B cell (primary cell): ENCODE measurements at regions of chr19 and their contacts with region 1.

Region 1: GRCh38 chr19:19663256-19664038 is at the start of gene ATP13A1:
- DNase-seq: peak; percentile 99
- ATAC-seq: peak; percentile 79
- H3K4me3 ChIP-seq: peak within 1 kb of the TSS; percentile 75 to 88 (median 77)
- H3K4me3 Mint-ChIP-seq: peak within 1 kb of the TSS; percentile 93
- H3K27ac ChIP-seq: peak within 1 kb of the TSS; percentile 77 to 97
- H3K27ac Mint-ChIP-seq: peak within 1 kb of the TSS; percentile 98
- H3K4me1 ChIP-seq: peaks cover 39 to 60% of the 10 kb centered on the region in 2 donors
- H3K4me1 Mint-ChIP-seq: peaks cover 40% of the 10 kb centered on the region
- H3K27me3 ChIP-seq: no peaks in the 10 kb centered on the region
- H3K27me3 Mint-ChIP-seq: no peaks in the 10 kb centered on the region
- CTCF ChIP-seq: peak; percentile 22
- total RNA-seq, gene ATP13A1: 153 and 156 TPM in 2 replicates

Region 2: DNA sequence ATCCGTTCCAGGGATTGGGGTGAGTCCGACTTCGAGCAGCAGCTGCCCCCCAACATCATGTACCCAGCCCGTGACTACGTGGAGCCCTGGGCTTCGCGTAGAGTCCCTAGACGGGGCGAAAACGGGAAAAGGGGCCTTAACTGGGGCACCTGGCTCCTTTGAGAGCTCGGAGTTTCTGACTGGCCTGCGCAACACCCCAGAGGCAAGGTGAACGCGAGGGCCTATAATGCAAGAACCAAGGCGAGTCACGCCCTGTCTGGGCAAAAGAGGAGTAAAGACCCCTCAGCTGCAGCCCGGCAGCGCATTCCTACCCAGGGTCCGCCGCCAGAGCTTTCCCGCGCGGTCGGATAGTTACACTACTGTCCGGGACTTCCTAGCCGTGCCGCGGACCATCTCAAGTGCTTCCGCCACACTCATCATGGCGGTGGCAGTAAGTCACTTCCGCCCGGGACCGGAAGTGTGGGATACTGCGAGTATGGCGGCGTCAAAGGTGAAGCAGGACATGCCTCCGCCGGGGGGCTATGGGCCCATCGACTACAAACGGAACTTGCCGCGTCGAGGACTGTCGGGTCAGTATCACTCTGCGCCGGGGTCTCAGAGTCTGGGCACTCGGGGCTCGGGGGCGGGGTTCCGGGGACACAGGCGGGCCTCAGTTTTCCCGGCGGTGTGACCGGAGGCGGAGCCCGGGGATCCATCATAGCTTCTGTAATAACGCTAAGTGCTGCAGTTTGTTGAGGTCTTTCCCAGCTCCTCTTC is 147.5 kb before region 1 on chr19 and contains the start of gene NDUFA13:
- CTCF ChIA-PET with region 1: no interaction called
- POLR2A ChIA-PET with region 1: interaction called, 5 read pairs
- intact Hi-C with region 1: loop called (anchors 1 kb)
- DNase-seq: peak; percentile 96
- ATAC-seq: peak; percentile 94
- H3K4me3 ChIP-seq: peak within 1 kb of the TSS; percentile 82 to 99 (median 95)
- H3K4me3 Mint-ChIP-seq: peak within 1 kb of the TSS; percentile 93
- H3K27ac ChIP-seq: peak within 1 kb of the TSS; percentile 72 to 81
- H3K27ac Mint-ChIP-seq: peak within 1 kb of the TSS; percentile 92
- H3K4me1 ChIP-seq: peaks cover 12 to 23% of the 10 kb centered on the region in 2 donors
- H3K4me1 Mint-ChIP-seq: peaks cover 27% of the 10 kb centered on the region
- H3K27me3 ChIP-seq: no peaks in the 10 kb centered on the region
- H3K27me3 Mint-ChIP-seq: no peaks in the 10 kb centered on the region
- CTCF ChIP-seq: no peak
- total RNA-seq, gene NDUFA13: 170 and 188 TPM in 2 replicates

Region 3: GRCh38 chr19:19610376-19611202 is 52.9 kb before region 1 on chr19:
- CTCF ChIA-PET with region 1: no interaction called
- POLR2A ChIA-PET with region 1: no interaction called
- intact Hi-C with region 1: no loop called
- DNase-seq: no peak
- ATAC-seq: no peak
- H3K4me3 ChIP-seq: no peak overlapping the region
- H3K4me3 Mint-ChIP-seq: no peak overlapping the region
- H3K27ac ChIP-seq: no peak overlapping the region
- H3K27ac Mint-ChIP-seq: no peak overlapping the region
- H3K4me1 ChIP-seq: no peaks in the 10 kb centered on the region
- H3K4me1 Mint-ChIP-seq: peaks cover 5% of the 10 kb centered on the region
- H3K27me3 ChIP-seq: no peaks in the 10 kb centered on the region
- H3K27me3 Mint-ChIP-seq: no peaks in the 10 kb centered on the region
- CTCF ChIP-seq: no peak

Region 4: DNA sequence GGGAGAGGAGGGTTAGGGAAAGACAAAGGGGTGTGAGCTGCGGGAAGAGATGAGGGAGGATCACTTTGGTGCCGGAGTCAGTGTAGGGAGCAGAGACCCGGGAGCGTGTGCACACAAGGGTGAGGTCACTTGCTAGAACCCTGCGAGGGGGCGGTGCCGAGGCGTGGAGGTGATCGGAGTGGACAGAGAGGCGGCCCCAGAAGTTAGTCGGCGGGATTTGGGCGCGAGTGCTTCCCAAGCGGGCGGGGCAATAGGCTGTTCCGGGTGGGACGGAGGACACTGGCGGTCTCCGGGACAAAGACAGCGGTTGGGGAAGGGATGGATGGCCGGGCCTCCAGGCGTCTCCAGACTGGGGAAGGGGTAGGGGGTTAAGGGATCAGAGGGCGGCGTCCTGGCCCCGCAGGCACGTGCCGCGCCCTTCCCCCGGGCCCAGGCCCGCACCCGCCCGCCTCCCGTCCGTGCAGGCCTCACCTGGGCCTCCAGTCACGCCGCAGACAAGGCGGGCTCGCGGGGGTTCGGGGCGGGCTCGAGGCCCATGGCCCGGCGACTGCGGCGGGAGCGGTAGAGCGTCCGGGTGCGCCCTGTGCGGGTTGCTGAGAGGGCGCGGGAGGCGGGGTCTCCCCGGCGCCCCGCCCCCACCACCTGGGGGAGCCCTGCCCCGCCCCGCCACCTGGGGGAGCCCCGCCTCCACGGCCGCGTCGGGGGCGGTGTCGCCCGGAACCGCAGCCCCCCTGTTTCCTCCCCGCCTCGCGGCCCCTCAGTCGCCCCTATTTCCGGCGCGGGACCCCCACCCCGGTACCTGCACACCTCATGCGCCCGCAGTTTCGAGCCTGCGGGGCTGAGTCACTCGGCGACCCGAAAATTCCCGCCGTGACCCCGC is 35.6 kb before region 1 on chr19 and contains the start of gene LPAR2:
- CTCF ChIA-PET with region 1: interaction called, 4 read pairs
- POLR2A ChIA-PET with region 1: interaction called, 7 read pairs
- intact Hi-C with region 1: loop called (anchors 1 kb)
- DNase-seq: peak; percentile 85
- ATAC-seq: peak; percentile 90
- H3K4me3 ChIP-seq: peak within 1 kb of the TSS; percentile 36 to 79 (median 66)
- H3K4me3 Mint-ChIP-seq: peak within 1 kb of the TSS; percentile 92
- H3K27ac ChIP-seq: peak within 1 kb of the TSS; percentile 47 to 71
- H3K27ac Mint-ChIP-seq: peak within 1 kb of the TSS; percentile 95
- H3K4me1 ChIP-seq: peaks cover 7 to 15% of the 10 kb centered on the region in 2 donors
- H3K4me1 Mint-ChIP-seq: peaks cover 20% of the 10 kb centered on the region
- H3K27me3 ChIP-seq: no peaks in the 10 kb centered on the region
- H3K27me3 Mint-ChIP-seq: no peaks in the 10 kb centered on the region
- CTCF ChIP-seq: no peak
- total RNA-seq, gene LPAR2: 27.1 and 30.3 TPM in 2 replicates

Region 5: DNA sequence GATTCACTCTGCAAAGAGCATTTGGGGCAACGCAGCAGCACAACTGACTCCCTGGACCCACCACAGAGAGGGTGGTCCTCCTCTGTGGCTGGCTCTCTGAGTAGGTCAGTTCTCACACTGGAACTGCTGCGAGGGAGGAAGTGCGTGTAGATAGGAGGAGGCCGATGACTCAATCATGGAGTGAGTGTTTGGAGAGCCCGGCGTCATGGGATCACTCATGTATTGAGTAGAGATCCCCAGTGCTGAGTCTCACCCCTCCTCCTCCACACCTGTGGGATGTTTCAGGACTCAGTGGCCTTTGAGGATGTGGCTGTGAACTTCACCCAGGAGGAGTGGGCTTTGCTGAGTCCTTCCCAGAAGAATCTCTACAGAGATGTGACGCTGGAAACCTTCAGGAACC is 14.1 kb after region 1 on chr19:
- CTCF ChIA-PET with region 1: no interaction called
- POLR2A ChIA-PET with region 1: interaction called, 4 read pairs
- intact Hi-C with region 1: loop called (anchors 2 kb)
- DNase-seq: no peak
- ATAC-seq: no peak
- H3K4me3 ChIP-seq: no peak overlapping the region
- H3K4me3 Mint-ChIP-seq: no peak overlapping the region
- H3K27ac ChIP-seq: no peak overlapping the region
- H3K27ac Mint-ChIP-seq: no peak overlapping the region
- H3K4me1 ChIP-seq: no peaks in the 10 kb centered on the region
- H3K4me1 Mint-ChIP-seq: peaks cover 16% of the 10 kb centered on the region
- H3K27me3 ChIP-seq: no peaks in the 10 kb centered on the region
- H3K27me3 Mint-ChIP-seq: no peaks in the 10 kb centered on the region
- CTCF ChIP-seq: no peak

Region 6: DNA sequence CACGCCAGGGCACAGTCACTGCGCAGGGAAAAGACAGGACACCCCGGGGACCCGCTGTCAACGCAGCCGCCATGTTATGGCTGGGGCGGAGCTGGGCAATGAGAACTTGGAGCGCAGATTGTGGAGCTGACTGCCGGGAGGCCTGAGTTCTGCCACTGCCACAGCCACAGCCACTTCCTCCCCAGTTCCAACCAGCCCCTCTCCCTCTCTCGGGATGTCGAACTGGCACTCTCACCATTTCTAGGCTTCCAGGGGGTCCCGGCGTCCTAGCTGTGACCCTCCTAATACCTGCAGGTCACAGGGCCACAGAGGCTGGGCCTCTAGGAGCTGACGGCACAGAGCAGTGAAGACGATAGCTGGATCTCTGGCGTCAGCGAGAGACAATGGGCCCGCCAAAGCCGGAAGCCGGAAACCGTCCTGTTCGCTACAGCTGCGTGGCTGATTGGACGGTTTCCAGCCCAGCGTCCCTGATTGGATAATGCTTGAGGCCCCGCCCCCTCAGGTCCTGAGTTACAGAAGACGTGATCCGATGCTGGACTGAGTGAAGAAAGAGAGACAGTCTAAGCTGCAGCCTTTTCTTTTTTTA is 158.0 kb after region 1 on chr19 and contains the start of gene ZNF506:
- CTCF ChIA-PET with region 1: no interaction called
- POLR2A ChIA-PET with region 1: interaction called, 16 read pairs
- intact Hi-C with region 1: loop called (anchors 1 kb)
- DNase-seq: peak; percentile 97
- ATAC-seq: peak; percentile 93
- H3K4me3 ChIP-seq: peak within 1 kb of the TSS; percentile 74 to 100 (median 91)
- H3K4me3 Mint-ChIP-seq: peak within 1 kb of the TSS; percentile 99
- H3K27ac ChIP-seq: peak within 1 kb of the TSS; percentile 97 to 99
- H3K27ac Mint-ChIP-seq: peak within 1 kb of the TSS; percentile 99
- H3K4me1 ChIP-seq: peaks cover 40 to 48% of the 10 kb centered on the region in 2 donors
- H3K4me1 Mint-ChIP-seq: peaks cover 51% of the 10 kb centered on the region
- H3K27me3 ChIP-seq: no peaks in the 10 kb centered on the region
- H3K27me3 Mint-ChIP-seq: no peaks in the 10 kb centered on the region
- CTCF ChIP-seq: no peak
- total RNA-seq, gene ZNF506: 67.6 and 80.3 TPM in 2 replicates

Region 7: DNA sequence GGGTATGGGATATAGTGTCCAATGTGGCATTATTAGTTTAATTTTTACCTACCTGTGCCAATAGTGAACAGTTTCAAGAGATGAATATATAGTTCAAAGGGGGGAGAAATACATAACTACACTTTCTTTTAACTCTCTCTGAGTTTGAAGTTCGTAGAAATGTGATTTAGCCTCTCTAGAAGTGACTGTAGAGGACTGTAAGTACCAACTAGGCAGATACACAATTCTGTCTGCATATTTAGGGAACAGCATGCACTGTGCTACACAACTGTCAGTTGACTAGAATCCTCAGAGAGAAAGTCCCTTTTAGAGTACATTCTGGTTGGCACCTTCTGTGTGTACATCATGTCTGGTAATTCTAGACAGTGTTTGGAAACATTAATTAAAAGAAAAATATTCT is 396.8 kb after region 1 on chr19:
- CTCF ChIA-PET with region 1: no interaction called
- POLR2A ChIA-PET with region 1: no interaction called
- intact Hi-C with region 1: no loop called
- DNase-seq: no peak
- ATAC-seq: no peak
- H3K4me3 ChIP-seq: no peak overlapping the region
- H3K4me3 Mint-ChIP-seq: no peak overlapping the region
- H3K27ac ChIP-seq: no peak overlapping the region
- H3K27ac Mint-ChIP-seq: no peak overlapping the region
- H3K4me1 ChIP-seq: no peaks in the 10 kb centered on the region
- H3K4me1 Mint-ChIP-seq: peaks cover 4% of the 10 kb centered on the region
- H3K27me3 ChIP-seq: peaks cover 0 to 8% (median 0%) of the 10 kb centered on the region in 4 experiments
- H3K27me3 Mint-ChIP-seq: no peaks in the 10 kb centered on the region
- CTCF ChIP-seq: no peak

Region 8: DNA sequence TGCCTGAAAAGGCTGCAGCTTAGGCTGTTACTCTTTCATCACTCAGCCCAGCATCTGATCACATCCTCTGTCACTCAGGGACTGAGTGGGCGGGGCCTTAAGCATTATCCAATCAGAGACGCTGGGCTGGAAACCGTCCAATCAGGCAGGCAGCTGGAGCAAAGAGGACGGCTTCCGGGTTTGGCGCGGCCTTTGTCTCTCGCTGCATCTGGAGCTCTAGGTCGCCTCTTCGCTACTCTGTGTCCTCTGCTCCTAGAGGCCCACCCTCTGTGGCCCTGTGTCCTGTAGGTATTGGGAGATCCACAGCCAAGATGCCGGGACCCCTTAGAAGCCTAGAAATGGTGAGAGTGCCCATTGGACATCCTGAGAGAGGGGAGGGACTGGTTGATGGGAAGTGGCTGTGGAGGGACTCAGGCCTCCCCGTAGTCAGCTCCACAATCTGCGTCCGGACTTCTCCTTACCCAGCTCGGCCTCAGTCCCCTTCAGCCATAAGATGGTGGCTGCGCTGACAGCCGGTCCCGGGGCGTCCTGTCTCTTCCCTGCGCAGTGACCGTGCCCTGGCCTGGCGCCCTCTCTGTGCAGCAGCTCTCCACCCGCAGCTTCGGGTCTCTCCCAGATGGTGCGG is 503.7 kb after region 1 on chr19 and contains the start of gene ZNF486:
- CTCF ChIA-PET with region 1: no interaction called
- POLR2A ChIA-PET with region 1: no interaction called
- intact Hi-C with region 1: loop called (anchors 5 kb)
- DNase-seq: peak; percentile 95
- ATAC-seq: peak; percentile 98
- H3K4me3 ChIP-seq: peak within 1 kb of the TSS; percentile 54 to 99 (median 73)
- H3K4me3 Mint-ChIP-seq: peak within 1 kb of the TSS; percentile 100
- H3K27ac ChIP-seq: peak within 1 kb of the TSS; percentile 65 to 78
- H3K27ac Mint-ChIP-seq: peak within 1 kb of the TSS; percentile 97
- H3K4me1 ChIP-seq: peaks cover 17 to 25% of the 10 kb centered on the region in 2 donors
- H3K4me1 Mint-ChIP-seq: peaks cover 56% of the 10 kb centered on the region
- H3K27me3 ChIP-seq: no peaks in the 10 kb centered on the region
- H3K27me3 Mint-ChIP-seq: no peaks in the 10 kb centered on the region
- CTCF ChIP-seq: no peak
- total RNA-seq, gene ZNF486: 16.6 and 18.3 TPM in 2 replicates